B cell (primary cell): ENCODE measurements at regions of chr15 and their contacts with region 1.

Region 1: DNA sequence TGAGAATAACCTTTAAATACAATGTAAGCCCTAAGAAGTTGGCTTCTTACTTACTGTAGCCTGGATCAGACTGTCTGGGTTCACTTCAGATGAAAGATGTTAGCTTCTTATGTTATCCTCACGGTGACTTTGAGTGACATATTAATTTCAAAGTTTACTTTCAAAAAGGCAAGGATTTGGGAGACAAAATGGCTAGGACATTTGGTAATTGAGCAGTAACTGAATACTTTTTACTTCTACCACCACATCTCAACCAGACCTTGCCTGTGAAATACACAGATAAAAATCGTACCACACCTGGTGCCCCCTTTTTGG is 36.0 kb upstream of the BNIP2 start:
- DNase-seq: no peak
- ATAC-seq: no peak
- H3K4me3 ChIP-seq: no peak overlapping the region
- H3K4me3 Mint-ChIP-seq: no peak overlapping the region
- H3K27ac ChIP-seq: no peak overlapping the region
- H3K27ac Mint-ChIP-seq: no peak overlapping the region
- H3K4me1 ChIP-seq: no peaks in the 10 kb centered on the region
- H3K4me1 Mint-ChIP-seq: no peaks in the 10 kb centered on the region
- H3K27me3 ChIP-seq: peaks cover 0 to 5% (median 2%) of the 10 kb centered on the region in 4 experiments
- H3K27me3 Mint-ChIP-seq: peaks cover 26% of the 10 kb centered on the region
- CTCF ChIP-seq: no peak

Region 2: GRCh38 chr15:60179786-60180391 is 454.8 kb after region 1 on chr15:
- CTCF ChIA-PET with region 1: interaction called, 20 read pairs
- POLR2A ChIA-PET with region 1: no interaction called
- intact Hi-C with region 1: no loop called
- DNase-seq: peak; percentile 61
- ATAC-seq: peak; percentile 60
- H3K4me3 ChIP-seq: no peak overlapping the region
- H3K4me3 Mint-ChIP-seq: no peak overlapping the region
- H3K27ac ChIP-seq: no peak overlapping the region
- H3K27ac Mint-ChIP-seq: no peak overlapping the region
- H3K4me1 ChIP-seq: no peaks in the 10 kb centered on the region
- H3K4me1 Mint-ChIP-seq: no peaks in the 10 kb centered on the region
- H3K27me3 ChIP-seq: no peaks in the 10 kb centered on the region
- H3K27me3 Mint-ChIP-seq: peaks cover 28% of the 10 kb centered on the region
- CTCF ChIP-seq: peak; percentile 94